ENCODE measurements at regions of chr16 and their contacts with region 1.

Region 1: DNA sequence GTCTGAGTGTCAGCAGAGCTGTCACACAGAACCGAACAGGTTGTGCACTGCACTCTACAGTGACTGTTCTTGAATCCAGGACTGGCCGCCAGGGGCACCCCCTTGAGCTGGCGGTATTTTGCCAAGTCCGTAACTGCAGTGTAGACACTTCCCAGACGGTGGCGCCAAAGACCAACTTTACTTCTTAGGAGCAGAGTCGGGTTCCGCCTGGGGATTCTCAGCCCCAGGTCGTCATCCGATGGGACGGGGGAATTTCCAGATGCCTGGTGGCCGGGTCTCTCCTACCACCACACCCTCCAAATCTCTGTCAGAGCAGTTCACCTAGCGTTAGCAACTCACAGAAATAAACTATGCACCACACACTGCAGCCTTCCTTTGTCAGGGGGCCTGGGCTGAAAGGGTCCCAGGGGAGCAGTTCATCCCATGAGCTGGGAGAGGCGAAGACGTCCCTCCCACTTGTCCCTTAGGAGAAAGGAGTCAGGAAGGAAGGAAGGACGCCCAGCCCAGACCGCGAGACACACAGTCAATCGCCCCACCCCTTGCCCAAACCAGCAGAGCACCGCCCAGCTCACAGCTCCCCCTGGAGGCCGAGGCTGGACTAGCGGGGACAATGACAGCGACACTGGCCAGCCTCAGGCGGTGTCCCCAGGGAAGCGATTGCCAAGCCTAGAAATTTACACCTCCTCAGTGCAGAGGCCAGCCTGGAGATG is 7.4 kb upstream of the RIPOR1 start:
- DNase-seq: peak; percentile 91
- CTCF ChIP-seq: peak; percentile 99

Region 2: GRCh38 chr16:67490335-67491096 is 30.7 kb before region 1 on chr16:
- CTCF ChIA-PET with region 1: interaction called, 238 read pairs
- POLR2A ChIA-PET with region 1: no interaction called
- DNase-seq: no peak
- CTCF ChIP-seq: no peak

Region 3: DNA sequence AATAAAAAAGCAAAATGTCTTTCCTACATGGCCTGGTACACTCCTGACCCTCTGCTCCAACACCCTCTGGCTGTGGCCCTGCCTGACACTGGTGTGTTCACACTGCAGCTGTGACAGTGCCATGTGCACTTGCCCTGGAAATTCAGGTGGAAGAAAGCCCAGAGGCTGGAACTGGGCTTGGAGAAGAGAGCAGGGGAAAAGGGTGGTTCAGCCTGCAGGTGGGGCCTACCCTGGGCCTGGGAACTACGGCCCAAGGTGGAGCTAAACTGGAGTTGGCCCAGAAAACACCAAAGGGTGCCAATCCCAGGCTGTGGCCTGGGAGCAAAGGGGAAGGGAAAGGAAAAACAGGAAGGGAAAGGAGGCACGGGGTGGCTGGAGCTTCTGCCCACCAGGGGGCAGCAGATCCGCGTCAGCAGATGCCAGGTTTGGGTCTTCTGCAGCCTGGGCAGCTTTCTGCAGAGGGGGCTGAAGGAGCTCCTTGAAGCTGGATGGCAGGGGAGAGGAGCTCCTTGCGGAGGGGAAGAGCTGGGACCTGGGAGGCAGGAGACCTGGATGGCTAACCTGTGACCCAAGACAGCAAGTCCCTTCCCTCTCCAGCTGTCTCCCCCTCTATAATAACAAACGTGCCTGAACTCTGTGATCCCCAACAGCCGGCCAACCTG is 25.6 kb after region 1 on chr16:
- CTCF ChIA-PET with region 1: interaction called, 75 read pairs
- POLR2A ChIA-PET with region 1: no interaction called
- DNase-seq: peak; percentile 80
- CTCF ChIP-seq: peak; percentile 96

Region 4: GRCh38 chr16:67595033-67595355 is 73.7 kb after region 1 on chr16:
- CTCF ChIA-PET with region 1: interaction called, 15 read pairs
- POLR2A ChIA-PET with region 1: no interaction called
- DNase-seq: no peak
- CTCF ChIP-seq: no peak

Region 5: GRCh38 chr16:67667817-67668494 is 146.7 kb after region 1 on chr16:
- CTCF ChIA-PET with region 1: interaction called, 357 read pairs
- POLR2A ChIA-PET with region 1: no interaction called
- DNase-seq: peak; percentile 92
- CTCF ChIP-seq: peak; percentile 86